Activated naive CD4-positive, alpha-beta T cell treated with anti-CD3 and anti-CD28 coated beads for 36 hours (primary cell): ENCODE measurements at regions of chr4 and their contacts with region 1.

Region 1: GRCh38 chr4:165207431-165208220 is at the start of gene KLHL2:
- DNase-seq: peak; percentile 69
- H3K4me3 Mint-ChIP-seq: peak within 1 kb of the TSS; percentile 83
- H3K27ac Mint-ChIP-seq: peak within 1 kb of the TSS; percentile 92
- H3K4me1 Mint-ChIP-seq: peaks cover 71% of the 10 kb centered on the region
- H3K27me3 Mint-ChIP-seq: no peaks in the 10 kb centered on the region
- total RNA-seq, gene KLHL2: 36.8 to 39.2 TPM

Region 2: DNA sequence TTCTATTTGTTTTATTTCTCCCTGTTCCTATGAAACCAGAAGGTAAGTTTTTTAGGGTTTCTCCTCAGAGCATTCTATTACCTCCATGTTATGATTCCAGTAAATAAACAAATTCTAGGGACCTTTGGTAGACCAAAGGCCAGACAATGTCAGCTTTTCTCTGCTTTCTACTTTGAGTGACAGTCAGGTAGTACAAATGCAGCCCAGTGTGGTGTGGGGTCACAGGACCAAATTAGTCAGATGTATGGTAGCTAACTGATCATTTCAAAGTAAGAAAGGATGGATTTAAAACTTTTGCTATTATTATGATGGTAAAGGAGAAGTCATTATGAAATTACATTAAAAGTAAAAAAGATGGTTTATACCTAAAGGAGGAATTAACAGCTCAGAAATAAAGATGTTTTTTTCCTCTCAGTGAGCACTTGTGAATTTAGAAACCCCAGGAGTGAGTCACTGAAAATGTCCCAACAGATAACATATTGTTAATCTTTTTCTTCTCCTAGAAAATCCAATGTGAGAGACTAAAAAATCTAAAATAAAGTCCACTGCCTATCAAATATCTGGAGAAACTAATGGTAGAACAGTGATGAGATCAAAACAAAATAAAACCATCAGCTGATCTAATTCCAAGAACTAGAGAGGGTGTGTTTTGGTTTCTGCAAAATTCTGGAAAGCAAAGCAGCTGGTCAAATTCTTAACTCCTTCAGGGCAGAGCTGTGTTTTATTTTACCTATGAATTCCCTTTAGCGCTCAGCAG is 16.9 kb before region 1 on chr4:
- CTCF ChIA-PET with region 1: interaction called, 6 read pairs
- intact Hi-C with region 1: loop called (anchors 1 kb)
- DNase-seq: peak; percentile 73
- H3K4me3 Mint-ChIP-seq: no peak overlapping the region
- H3K27ac Mint-ChIP-seq: peak overlapping the region; percentile 79
- H3K4me1 Mint-ChIP-seq: peaks cover 33% of the 10 kb centered on the region
- H3K27me3 Mint-ChIP-seq: peaks cover 4% of the 10 kb centered on the region

Region 3: DNA sequence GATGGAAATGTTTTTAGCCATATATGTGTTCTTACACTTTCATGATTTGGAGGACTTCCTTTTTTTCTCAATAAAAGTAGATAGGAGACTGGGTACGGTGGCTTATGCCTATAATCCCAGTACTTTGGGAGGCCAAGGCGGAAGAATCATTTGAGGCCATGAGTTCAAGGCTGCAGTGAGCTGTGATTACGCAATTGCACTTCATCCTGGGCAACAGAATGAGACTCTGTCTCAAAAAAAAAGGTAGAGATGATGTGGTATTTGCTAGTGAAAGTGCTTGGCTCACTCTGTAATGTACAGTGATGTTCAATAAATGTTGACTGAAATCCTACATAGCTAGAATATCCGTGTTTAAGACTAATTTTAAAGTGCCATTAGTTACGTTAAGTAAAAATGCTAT is 27.1 kb after region 1 on chr4:
- CTCF ChIA-PET with region 1: no interaction called
- intact Hi-C with region 1: loop called (anchors 2 kb)
- DNase-seq: no peak
- H3K4me3 Mint-ChIP-seq: no peak overlapping the region
- H3K27ac Mint-ChIP-seq: no peak overlapping the region
- H3K4me1 Mint-ChIP-seq: peaks cover 29% of the 10 kb centered on the region
- H3K27me3 Mint-ChIP-seq: no peaks in the 10 kb centered on the region

Region 4: DNA sequence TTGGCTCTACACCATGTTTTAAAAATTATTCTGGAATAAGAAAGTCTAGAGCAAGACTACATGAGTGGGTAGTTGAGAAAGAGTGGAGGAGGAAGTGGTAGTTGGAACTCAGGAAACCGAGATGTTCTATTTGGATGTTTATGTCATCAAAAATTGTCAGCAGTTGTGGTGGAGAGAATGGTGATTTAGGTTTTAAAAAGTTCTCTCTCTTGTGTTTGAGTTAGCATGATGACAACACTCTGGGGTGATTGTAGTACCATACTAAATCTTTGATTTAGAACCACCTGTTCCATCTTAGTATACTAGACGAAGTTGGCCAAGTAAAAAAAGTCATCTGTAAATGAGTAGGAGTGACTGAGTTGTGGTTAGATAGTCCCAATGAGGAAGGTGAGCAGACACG is 40.5 kb after region 1 on chr4:
- CTCF ChIA-PET with region 1: no interaction called
- intact Hi-C with region 1: loop called (anchors 2 kb)
- DNase-seq: no peak
- H3K4me3 Mint-ChIP-seq: no peak overlapping the region
- H3K27ac Mint-ChIP-seq: no peak overlapping the region
- H3K4me1 Mint-ChIP-seq: peaks cover 4% of the 10 kb centered on the region
- H3K27me3 Mint-ChIP-seq: no peaks in the 10 kb centered on the region

Region 5: GRCh38 chr4:165294907-165295306 is 87.3 kb after region 1 on chr4:
- CTCF ChIA-PET with region 1: no interaction called
- intact Hi-C with region 1: loop called (anchors 2 kb)
- DNase-seq: peak; percentile 62
- H3K4me3 Mint-ChIP-seq: peak overlapping the region; percentile 22
- H3K27ac Mint-ChIP-seq: peak overlapping the region; percentile 54
- H3K4me1 Mint-ChIP-seq: peaks cover 17% of the 10 kb centered on the region
- H3K27me3 Mint-ChIP-seq: no peaks in the 10 kb centered on the region